HepG2 (cell line): ENCODE measurements at regions of chr17 and their contacts with region 1.

Region 1: DNA sequence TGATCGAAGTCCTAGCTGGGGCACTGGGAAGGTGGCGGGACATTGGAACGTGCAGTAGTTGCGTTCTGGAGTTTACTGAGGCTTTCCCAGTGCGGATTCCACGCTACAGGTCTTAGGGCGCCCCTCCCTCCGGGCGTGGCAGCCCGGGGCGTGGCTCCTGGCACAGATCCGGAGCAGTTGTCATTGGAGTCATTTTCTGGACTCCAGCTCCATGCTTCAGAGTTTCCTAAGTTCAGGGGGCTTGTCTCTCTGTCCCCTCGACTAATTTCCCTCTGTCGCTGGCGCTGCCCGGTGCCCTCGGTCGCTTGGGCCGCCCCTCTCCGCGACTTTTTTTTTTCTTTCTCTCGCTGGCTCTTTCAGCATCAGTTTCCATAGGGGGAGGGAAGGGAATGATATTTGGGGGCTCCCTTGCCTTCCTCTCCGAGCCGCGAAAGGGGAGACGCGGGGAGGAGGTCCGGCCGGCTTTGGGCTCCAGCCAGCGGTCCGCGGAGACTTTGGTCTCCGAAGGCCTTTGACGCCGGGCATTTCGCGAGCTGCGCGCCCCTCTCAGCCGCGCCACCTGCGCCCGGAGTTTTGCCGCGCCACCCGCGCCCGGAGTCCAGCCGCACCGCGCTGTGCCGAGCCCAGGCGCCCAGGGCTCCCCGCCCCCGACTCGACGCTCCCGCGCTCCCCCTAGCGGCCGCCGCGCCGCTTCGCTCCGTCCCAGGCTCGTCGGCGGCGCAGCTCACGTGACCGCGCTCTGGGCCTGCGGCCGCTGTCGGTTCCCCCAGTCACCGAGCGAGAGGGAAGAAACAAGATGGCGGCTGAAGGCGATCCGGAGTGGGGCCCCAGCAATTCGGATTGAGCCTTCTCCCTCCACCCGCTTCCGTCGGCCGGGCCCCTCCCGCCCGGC is at the start of gene BPTF:
- DNase-seq: peak; percentile 87
- ATAC-seq: peak; percentile 96
- H3K4me3 ChIP-seq: peak within 1 kb of the TSS; percentile 90 to 100 (median 93)
- H3K27ac ChIP-seq: peak within 1 kb of the TSS; percentile 74
- H3K4me1 ChIP-seq: peaks cover 43% of the 10 kb centered on the region
- H3K27me3 ChIP-seq: peaks cover 0 to 12% of the 10 kb centered on the region in 2 experiments; a peak in 1 of 5 replicates
- CTCF ChIP-seq: peak; percentile 92
- EP300 ChIP-seq: peak in 1 of 2 experiments; percentile 61; a peak in 2 of 4 replicates
- POLR2A ChIP-seq: peak; percentile 90
- RAD21 ChIP-seq: peak; percentile 89
- total RNA-seq, gene BPTF: 43.5 and 73.1 TPM in 2 replicates

Region 2: DNA sequence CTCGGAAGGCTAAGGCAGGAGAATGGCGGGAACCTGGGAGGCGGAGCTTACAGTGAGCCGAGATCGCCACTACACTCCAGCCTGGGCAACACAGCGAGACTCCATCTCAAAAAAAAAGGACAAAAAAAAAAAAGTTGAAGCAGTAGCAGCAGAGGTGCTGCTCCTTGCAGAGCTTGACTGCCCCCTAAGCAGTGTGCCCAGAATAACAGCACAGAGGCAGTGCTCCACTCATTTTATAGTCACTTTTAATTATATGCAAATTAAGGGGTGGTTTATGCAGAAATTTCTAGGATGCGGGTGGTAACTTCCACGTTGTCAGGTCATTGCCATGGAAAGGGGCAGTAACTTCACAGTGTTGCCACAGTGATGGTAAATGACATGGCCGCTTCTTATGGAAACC is 161.5 kb before region 1 on chr17:
- CTCF ChIA-PET with region 1: no interaction called
- POLR2A ChIA-PET with region 1: no interaction called
- in situ Hi-C with region 1: no loop called
- intact Hi-C with region 1: no loop called
- DNase-seq: no peak
- ATAC-seq: no peak
- H3K4me3 ChIP-seq: no peak overlapping the region
- H3K27ac ChIP-seq: no peak overlapping the region
- H3K4me1 ChIP-seq: no peaks in the 10 kb centered on the region
- H3K27me3 ChIP-seq: no peaks in the 10 kb centered on the region; a peak in 1 of 5 replicates
- CTCF ChIP-seq: peak; percentile 23; the same call in 1 of the 2 replicates
- EP300 ChIP-seq: no peak
- POLR2A ChIP-seq: no peak
- RAD21 ChIP-seq: no peak

Region 3: GRCh38 chr17:67717624-67718329 is 107.2 kb before region 1 on chr17 and contains the start of gene NOL11:
- CTCF ChIA-PET with region 1: no interaction called
- POLR2A ChIA-PET with region 1: interaction called, 9 read pairs
- in situ Hi-C with region 1: no loop called
- intact Hi-C with region 1: loop called (anchors 1 kb)
- DNase-seq: peak; percentile 98
- ATAC-seq: peak; percentile 98
- H3K4me3 ChIP-seq: peak within 1 kb of the TSS; percentile 90 to 97 (median 94)
- H3K27ac ChIP-seq: peak within 1 kb of the TSS; percentile 95
- H3K4me1 ChIP-seq: peaks cover 33% of the 10 kb centered on the region
- H3K27me3 ChIP-seq: no peaks in the 10 kb centered on the region; a peak in 1 of 5 replicates
- CTCF ChIP-seq: peak; percentile 100
- EP300 ChIP-seq: peak; percentile 28 to 39; a peak in 1 of 4 replicates
- POLR2A ChIP-seq: peak; percentile 97
- RAD21 ChIP-seq: peak; percentile 95
- total RNA-seq, gene NOL11: 124 and 187 TPM in 2 replicates

Region 4: DNA sequence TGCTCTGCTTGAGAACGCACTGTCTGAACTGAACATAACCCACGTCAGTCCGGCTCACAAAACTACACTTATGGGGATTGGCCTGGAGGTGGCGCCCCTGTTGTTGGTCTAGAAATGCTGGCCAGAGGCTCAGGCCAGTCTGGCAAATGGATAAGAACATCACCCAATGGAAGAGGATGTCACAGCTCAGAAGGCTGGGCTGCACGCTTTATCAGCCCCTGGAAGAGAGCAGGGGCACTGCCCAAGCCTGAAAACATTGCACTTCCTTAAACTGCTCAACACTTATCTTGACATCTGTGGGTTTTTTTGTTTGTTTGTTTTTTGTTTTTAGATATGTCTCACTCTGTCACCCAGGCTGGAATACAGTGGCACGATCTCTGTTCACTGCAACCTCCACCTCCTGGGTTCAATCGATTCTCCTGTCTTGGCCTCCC is 24.5 kb before region 1 on chr17:
- CTCF ChIA-PET with region 1: interaction called, 25 read pairs
- POLR2A ChIA-PET with region 1: interaction called, 5 read pairs
- in situ Hi-C with region 1: no loop called
- intact Hi-C with region 1: loop called (anchors 1 kb)
- DNase-seq: peak; percentile 83
- ATAC-seq: peak; percentile 96
- H3K4me3 ChIP-seq: no peak overlapping the region
- H3K27ac ChIP-seq: no peak overlapping the region
- H3K4me1 ChIP-seq: peaks cover 28% of the 10 kb centered on the region
- H3K27me3 ChIP-seq: peaks cover 3 to 11% of the 10 kb centered on the region in 2 experiments; a peak in 3 of 5 replicates
- CTCF ChIP-seq: peak; percentile 95
- EP300 ChIP-seq: no peak
- POLR2A ChIP-seq: no peak
- RAD21 ChIP-seq: peak; percentile 87

Region 5: DNA sequence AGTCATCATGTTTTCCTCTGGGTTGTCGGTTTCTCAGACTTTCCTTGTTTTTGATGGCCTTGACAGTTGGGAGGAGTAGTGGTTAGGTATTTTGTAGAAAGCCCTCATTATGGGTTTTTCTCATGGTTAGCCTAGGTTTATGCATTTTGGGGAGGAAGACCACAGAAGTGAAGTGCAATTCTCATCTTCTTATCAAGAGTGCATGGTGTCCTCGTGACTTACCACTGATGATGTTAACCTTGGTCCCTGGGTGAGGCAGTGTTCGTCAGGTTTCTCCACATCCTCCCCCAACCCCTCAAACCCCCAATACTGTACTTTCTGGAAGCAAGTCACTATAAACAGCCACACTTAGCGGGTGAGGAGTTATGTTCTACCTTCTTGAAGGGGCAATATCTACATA is 42.6 kb after region 1 on chr17:
- CTCF ChIA-PET with region 1: no interaction called
- POLR2A ChIA-PET with region 1: no interaction called
- in situ Hi-C with region 1: no loop called
- intact Hi-C with region 1: no loop called
- DNase-seq: no peak
- ATAC-seq: no peak
- H3K4me3 ChIP-seq: no peak overlapping the region
- H3K27ac ChIP-seq: no peak overlapping the region
- H3K4me1 ChIP-seq: no peaks in the 10 kb centered on the region
- H3K27me3 ChIP-seq: no peaks in the 10 kb centered on the region
- CTCF ChIP-seq: no peak
- EP300 ChIP-seq: no peak
- POLR2A ChIP-seq: no peak
- RAD21 ChIP-seq: no peak